AG04450 (cell line): ENCODE measurements at regions of chr17 and their contacts with region 1.

Region 1: DNA sequence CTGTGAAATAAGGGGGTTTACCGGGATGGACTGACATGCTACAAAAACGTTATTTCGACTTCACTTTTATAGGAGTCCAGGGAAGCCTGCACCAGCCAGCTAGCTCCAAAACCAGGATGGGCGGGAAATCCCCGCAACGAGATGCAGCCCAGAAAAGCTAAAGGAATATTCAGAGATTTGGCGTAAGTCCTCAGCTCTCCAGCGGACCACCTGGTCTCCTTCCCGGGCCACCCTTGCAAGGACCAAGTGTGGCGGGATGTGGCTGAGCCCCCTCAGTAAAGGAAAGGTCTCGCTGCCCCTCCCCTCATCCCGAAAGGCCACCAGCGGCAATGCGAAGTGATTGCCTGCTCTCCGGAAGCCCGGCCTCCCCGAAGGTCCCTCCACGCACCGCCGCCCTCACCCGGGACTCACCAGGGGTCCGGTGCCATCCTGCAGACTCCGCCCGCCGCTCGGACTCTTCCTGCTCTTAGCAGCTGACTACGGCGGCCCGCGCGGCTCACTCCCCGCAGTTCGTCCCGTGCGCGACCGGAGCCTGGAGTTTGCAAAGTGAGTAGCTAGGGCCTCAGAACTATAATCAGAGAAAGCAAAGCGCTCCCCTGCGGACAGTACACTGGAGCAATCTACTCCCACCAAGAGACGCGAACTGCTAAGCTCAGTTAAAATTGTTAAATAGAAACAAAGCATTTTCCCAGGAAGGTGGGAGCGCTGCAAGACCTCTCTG is at the start of gene STX8:
- DNase-seq: peak; percentile 75
- H3K4me3 ChIP-seq: peak within 1 kb of the TSS; percentile 87
- H3K27ac ChIP-seq: peak within 1 kb of the TSS; percentile 39
- H3K27me3 ChIP-seq: no peaks in the 10 kb centered on the region
- CTCF ChIP-seq: peak; percentile 19; the same call in 1 of the 2 replicates
- polyA plus RNA-seq, gene STX8: 89.6 and 103 TPM in 2 replicates

Region 2: DNA sequence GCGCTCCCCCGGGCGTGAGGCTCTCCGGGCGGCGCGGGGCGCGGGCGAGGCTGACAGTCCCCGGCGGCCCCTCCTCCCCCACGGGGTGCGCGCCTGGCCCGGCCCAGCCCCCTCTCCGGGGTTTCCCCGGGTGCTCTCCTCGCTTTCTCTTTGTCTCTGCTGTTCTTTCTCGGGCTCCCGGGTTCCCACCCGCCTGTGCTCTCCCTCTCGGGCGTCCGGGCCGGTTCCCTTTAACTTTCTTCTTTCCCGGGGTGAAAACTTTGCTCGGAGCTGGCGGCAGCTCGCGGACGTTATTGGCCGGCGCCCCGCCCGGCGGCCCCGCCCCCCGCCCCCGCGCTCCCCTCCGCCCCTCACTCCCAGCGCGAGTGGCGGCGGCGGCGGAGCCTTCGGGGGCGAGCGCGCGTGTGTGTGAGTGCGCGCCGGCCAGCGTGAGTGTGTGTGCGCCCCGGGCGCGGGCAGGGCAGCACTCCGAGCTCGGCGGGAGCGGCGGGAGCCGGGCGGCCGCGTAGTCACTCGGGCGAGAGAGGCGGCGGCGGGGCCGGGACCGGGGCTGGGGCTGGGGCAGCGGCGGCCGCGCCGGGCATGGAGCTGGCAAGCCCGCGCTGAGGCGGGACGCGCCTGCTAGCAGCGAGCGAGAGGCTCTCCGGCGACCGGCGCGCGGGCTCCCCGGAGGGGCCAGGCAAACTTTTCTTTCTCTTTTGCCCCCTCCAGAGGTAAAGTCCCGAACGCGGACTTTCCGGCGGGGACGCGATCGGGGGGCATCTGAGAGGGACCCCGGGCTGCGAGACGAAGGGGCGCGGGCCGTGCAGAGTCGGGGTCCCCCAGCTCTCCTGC is 554.2 kb before region 1 on chr17 and contains the start of gene NTN1:
- CTCF ChIA-PET with region 1: interaction called, 10 read pairs
- POLR2A ChIA-PET with region 1: no interaction called
- DNase-seq: no peak
- H3K4me3 ChIP-seq: peak within 1 kb of the TSS; percentile 48
- H3K27ac ChIP-seq: no peak within 1 kb of the TSS
- H3K27me3 ChIP-seq: peaks cover 37% of the 10 kb centered on the region
- CTCF ChIP-seq: no peak
- polyA plus RNA-seq, gene NTN1: 0.05 and 0.16 TPM in 2 replicates

Region 3: GRCh38 chr17:9322326-9322725 is 253.2 kb before region 1 on chr17:
- CTCF ChIA-PET with region 1: no interaction called
- POLR2A ChIA-PET with region 1: no interaction called
- DNase-seq: no peak
- H3K4me3 ChIP-seq: no peak overlapping the region
- H3K27ac ChIP-seq: no peak overlapping the region
- H3K27me3 ChIP-seq: no peaks in the 10 kb centered on the region
- CTCF ChIP-seq: peak; percentile 23

Region 4: GRCh38 chr17:9488556-9488955 is 87.0 kb before region 1 on chr17:
- CTCF ChIA-PET with region 1: no interaction called
- POLR2A ChIA-PET with region 1: no interaction called
- DNase-seq: no peak
- H3K4me3 ChIP-seq: no peak overlapping the region
- H3K27ac ChIP-seq: no peak overlapping the region
- H3K27me3 ChIP-seq: no peaks in the 10 kb centered on the region
- CTCF ChIP-seq: no peak

Region 5: GRCh38 chr17:9587969-9588656 is 12.6 kb after region 1 on chr17:
- CTCF ChIA-PET with region 1: interaction called, 14 read pairs
- POLR2A ChIA-PET with region 1: no interaction called
- DNase-seq: no peak
- H3K4me3 ChIP-seq: no peak overlapping the region
- H3K27ac ChIP-seq: no peak overlapping the region
- H3K27me3 ChIP-seq: no peaks in the 10 kb centered on the region
- CTCF ChIP-seq: no peak